ENCODE measurements at regions of chr6 and their contacts with region 1.

Region 1: GRCh38 chr6:44549516-44549915 is 162.0 kb downstream of the CDC5L start:
- DNase-seq: no peak
- H3K4me3 ChIP-seq: no peak overlapping the region
- H3K27ac ChIP-seq: no peak overlapping the region
- H3K4me1 ChIP-seq: no peaks in the 10 kb centered on the region
- H3K27me3 ChIP-seq: no peaks in the 10 kb centered on the region; a peak in 3 of 7 replicates
- CTCF ChIP-seq: no peak
- EP300 ChIP-seq: no peak
- POLR2A ChIP-seq: no peak
- RAD21 ChIP-seq: no peak

Region 2: GRCh38 chr6:44569931-44570385 is 20.4 kb after region 1 on chr6:
- CTCF ChIA-PET with region 1: interaction called, 10 read pairs
- POLR2A ChIA-PET with region 1: no interaction called
- DNase-seq: no peak
- H3K4me3 ChIP-seq: no peak overlapping the region
- H3K27ac ChIP-seq: no peak overlapping the region
- H3K4me1 ChIP-seq: peaks cover 0 to 2% (median 0%) of the 10 kb centered on the region in 4 experiments; a peak in 1 of 7 replicates
- H3K27me3 ChIP-seq: no peaks in the 10 kb centered on the region
- CTCF ChIP-seq: no peak
- EP300 ChIP-seq: no peak
- POLR2A ChIP-seq: no peak
- RAD21 ChIP-seq: no peak